CD4-positive, alpha-beta T cell (primary cell): ENCODE measurements at regions of chr4 and their contacts with region 1.

Region 1: GRCh38 chr4:95742872-95743271 is 97.0 kb upstream of the PDHA2 start:
- DNase-seq: no peak
- ATAC-seq: no peak
- H3K4me3 ChIP-seq: no peak overlapping the region
- H3K4me3 Mint-ChIP-seq: no peak overlapping the region
- H3K27ac ChIP-seq: no peak overlapping the region
- H3K27ac Mint-ChIP-seq: no peak overlapping the region
- H3K4me1 ChIP-seq: no peaks in the 10 kb centered on the region
- H3K4me1 Mint-ChIP-seq: no peaks in the 10 kb centered on the region
- H3K27me3 ChIP-seq: no peaks in the 10 kb centered on the region
- H3K27me3 Mint-ChIP-seq: no peaks in the 10 kb centered on the region
- CTCF ChIP-seq: no peak

Region 2: DNA sequence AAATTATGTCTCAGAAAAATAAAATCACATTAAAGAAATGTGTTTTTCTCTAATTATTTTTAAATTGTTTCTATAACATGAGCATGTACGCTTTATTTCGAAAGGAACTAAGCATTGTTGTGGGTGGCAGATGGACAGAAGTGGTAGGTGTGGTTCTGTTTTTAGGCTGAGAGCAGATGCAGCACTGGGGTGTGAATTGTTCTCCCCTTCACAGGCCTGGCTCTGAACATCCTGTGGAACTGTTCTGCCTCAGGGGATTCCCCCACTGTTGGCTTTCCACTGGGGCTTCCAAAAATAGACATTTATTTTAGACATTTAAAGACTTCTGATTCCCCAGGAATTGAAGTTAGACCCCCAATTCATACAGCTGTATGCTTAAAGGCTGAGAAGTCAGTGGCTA is 55.1 kb after region 1 on chr4:
- CTCF ChIA-PET with region 1: no interaction called
- POLR2A ChIA-PET with region 1: no interaction called
- intact Hi-C with region 1: loop called in 1 of 2 experiments (anchors 2 kb)
- DNase-seq: no peak
- ATAC-seq: no peak
- H3K4me3 ChIP-seq: no peak overlapping the region
- H3K4me3 Mint-ChIP-seq: no peak overlapping the region
- H3K27ac ChIP-seq: peak overlapping the region in 1 of 2 donors; percentile 7
- H3K27ac Mint-ChIP-seq: no peak overlapping the region
- H3K4me1 ChIP-seq: no peaks in the 10 kb centered on the region
- H3K4me1 Mint-ChIP-seq: no peaks in the 10 kb centered on the region
- H3K27me3 ChIP-seq: no peaks in the 10 kb centered on the region
- H3K27me3 Mint-ChIP-seq: no peaks in the 10 kb centered on the region
- CTCF ChIP-seq: no peak

Region 3: GRCh38 chr4:96016634-96017299 is 273.9 kb after region 1 on chr4:
- CTCF ChIA-PET with region 1: no interaction called
- POLR2A ChIA-PET with region 1: no interaction called
- intact Hi-C with region 1: no loop called
- DNase-seq: no peak
- ATAC-seq: no peak
- H3K4me3 ChIP-seq: no peak overlapping the region
- H3K4me3 Mint-ChIP-seq: no peak overlapping the region
- H3K27ac ChIP-seq: no peak overlapping the region
- H3K27ac Mint-ChIP-seq: no peak overlapping the region
- H3K4me1 ChIP-seq: no peaks in the 10 kb centered on the region
- H3K4me1 Mint-ChIP-seq: no peaks in the 10 kb centered on the region
- H3K27me3 ChIP-seq: no peaks in the 10 kb centered on the region
- H3K27me3 Mint-ChIP-seq: no peaks in the 10 kb centered on the region
- CTCF ChIP-seq: no peak